Activated CD4-positive, alpha-beta T cell treated with anti-CD3 and anti-CD28 coated beads for 36 hours (primary cell): ENCODE measurements at regions of chr9 and their contacts with region 1.

Region 1: DNA sequence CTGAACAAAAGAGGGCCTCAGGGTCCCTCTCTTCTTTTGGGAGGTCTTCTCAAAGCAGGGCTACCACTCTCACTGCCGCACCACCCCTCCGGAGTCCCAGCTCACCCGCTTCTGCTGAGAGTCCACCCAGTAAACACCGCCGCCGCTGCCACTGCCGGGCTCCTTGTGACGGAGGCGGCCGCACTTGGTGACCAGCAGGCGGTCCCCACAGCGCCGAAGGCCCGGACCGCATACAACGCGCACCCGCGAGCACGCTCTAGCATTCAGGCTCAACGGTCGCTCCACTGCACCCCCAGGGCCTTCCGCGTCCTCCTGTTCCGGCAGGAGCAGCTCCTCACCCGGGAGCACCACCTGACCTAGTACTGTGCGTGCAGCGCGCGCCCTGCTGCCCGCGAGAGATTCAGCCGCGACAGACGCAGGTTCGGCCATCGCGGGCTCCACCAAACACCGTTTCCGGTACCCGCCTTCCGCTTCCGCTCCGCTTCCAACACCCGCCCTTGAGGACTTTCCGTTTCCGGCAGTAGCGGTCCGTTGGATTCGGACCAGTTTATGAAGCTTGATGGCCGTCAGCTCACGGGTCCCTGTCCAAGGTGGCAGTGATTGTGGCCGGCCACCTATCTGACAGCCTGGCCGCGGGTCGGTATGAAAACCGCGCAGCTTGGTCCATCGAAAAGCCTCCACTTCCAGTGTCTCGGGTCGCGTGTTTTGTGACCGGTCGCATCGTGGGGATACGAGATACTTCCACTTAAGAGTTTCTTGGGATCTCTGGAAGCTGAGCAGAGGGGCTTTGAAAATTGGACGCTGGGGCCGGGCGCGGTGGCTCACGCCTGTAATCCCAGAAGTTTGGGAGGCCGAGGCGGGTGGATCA is at the start of gene EXOSC3:
- DNase-seq: peak; percentile 93
- ATAC-seq: peak; percentile 90
- H3K4me3 Mint-ChIP-seq: peak within 1 kb of the TSS; percentile 98
- H3K27ac Mint-ChIP-seq: peak within 1 kb of the TSS; percentile 96
- H3K4me1 Mint-ChIP-seq: peaks cover 30% of the 10 kb centered on the region
- H3K27me3 Mint-ChIP-seq: no peaks in the 10 kb centered on the region
- total RNA-seq, gene EXOSC3: 86.9 to 117 TPM

Region 2: GRCh38 chr9:37422289-37423104 is 362.4 kb before region 1 on chr9 and contains the start of gene GRHPR:
- CTCF ChIA-PET with region 1: no interaction called
- POLR2A ChIA-PET with region 1: no interaction called
- intact Hi-C with region 1: loop called in 1 of 2 experiments (anchors 1 kb)
- DNase-seq: peak; percentile 95
- ATAC-seq: peak; percentile 99
- H3K4me3 Mint-ChIP-seq: peak within 1 kb of the TSS; percentile 91
- H3K27ac Mint-ChIP-seq: peak within 1 kb of the TSS; percentile 95
- H3K4me1 Mint-ChIP-seq: peaks cover 25% of the 10 kb centered on the region
- H3K27me3 Mint-ChIP-seq: no peaks in the 10 kb centered on the region
- total RNA-seq, gene GRHPR: 69.1 to 74.4 TPM

Region 3: GRCh38 chr9:37732086-37732741 is 52.6 kb before region 1 on chr9:
- CTCF ChIA-PET with region 1: no interaction called
- POLR2A ChIA-PET with region 1: no interaction called
- intact Hi-C with region 1: no loop called
- DNase-seq: no peak
- ATAC-seq: no peak
- H3K4me3 Mint-ChIP-seq: no peak overlapping the region
- H3K27ac Mint-ChIP-seq: no peak overlapping the region
- H3K4me1 Mint-ChIP-seq: no peaks in the 10 kb centered on the region
- H3K27me3 Mint-ChIP-seq: peaks cover 9% of the 10 kb centered on the region

Region 4: DNA sequence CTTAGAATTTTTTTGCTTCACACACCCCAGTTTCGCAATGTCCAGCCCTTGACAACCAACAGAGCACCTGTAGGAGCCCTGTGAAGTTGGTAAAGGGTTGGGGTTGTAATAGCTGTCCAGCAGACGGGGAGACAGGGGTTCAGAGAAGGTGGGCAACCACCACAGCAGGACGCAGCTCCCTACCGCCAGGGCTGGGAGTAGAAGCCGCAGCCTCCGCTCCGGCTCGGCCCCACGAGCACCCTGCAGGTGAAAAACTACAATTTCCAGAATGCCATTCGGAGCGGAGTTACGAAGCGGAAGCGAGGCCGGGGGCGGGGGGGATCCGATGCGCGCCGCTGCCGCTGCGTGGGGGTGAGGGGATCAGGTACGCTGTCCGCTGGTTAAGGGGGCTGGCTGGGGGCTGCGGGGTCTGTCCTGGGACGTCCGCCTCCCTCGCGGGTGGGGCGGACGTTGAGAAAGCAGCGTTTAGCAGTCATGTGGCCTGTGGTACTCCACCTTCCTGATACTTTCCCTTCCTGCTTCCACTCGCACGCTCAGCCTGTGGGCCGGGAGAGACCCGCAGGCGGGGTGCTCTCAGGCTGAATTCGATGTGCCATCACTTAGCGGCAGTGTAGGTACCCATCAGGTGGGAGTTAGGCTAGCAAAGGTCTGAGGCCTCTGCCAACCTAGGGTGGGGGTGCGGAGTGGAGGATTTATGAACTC is 31.2 kb before region 1 on chr9 and contains the start of gene TRMT10B:
- CTCF ChIA-PET with region 1: interaction called, 4 read pairs
- POLR2A ChIA-PET with region 1: no interaction called
- intact Hi-C with region 1: loop called (anchors 1 to 2 kb)
- DNase-seq: peak; percentile 88
- ATAC-seq: peak; percentile 94
- H3K4me3 Mint-ChIP-seq: peak within 1 kb of the TSS; percentile 91
- H3K27ac Mint-ChIP-seq: peak within 1 kb of the TSS; percentile 92
- H3K4me1 Mint-ChIP-seq: peaks cover 32% of the 10 kb centered on the region
- H3K27me3 Mint-ChIP-seq: no peaks in the 10 kb centered on the region
- total RNA-seq, gene TRMT10B: 12.3 to 15.6 TPM

Region 5: DNA sequence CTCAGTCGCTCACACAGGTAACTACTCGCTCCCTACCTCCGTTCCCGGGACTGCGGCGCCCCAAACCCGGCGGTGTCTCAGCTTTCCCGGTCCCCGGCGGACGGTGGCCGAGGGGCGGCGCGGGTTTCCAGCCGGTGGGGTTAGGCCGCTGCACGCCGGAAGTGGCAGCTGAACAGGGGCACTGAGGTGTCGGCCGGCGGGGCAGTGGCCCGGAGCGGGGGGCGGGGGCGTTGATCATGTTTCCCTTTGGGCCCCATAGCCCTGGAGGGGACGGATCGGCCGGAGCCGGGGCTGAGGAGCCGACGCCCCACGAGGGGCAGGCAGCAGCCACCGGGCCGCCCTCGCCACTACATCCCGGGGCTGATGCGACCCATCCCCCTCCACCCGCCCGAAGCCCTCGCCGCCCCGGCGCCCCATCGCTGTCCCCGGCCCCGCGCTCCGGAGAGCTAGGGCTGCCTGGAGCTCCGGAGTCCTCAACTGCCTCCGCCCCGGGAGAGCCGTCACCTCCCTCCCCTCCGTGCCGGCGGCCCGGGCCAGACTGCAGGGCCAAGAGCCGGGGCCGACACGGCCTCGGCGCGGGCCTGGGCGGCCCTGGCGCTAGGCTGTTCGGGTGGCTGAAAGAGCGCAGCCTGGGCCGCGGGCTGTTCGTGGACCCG is 15.9 kb after region 1 on chr9 and contains the start of gene DCAF10:
- CTCF ChIA-PET with region 1: interaction called, 5 read pairs
- POLR2A ChIA-PET with region 1: interaction called, 10 read pairs
- intact Hi-C with region 1: loop called (anchors 1 kb)
- DNase-seq: peak; percentile 92
- ATAC-seq: peak; percentile 78
- H3K4me3 Mint-ChIP-seq: peak within 1 kb of the TSS; percentile 90
- H3K27ac Mint-ChIP-seq: peak within 1 kb of the TSS; percentile 89
- H3K4me1 Mint-ChIP-seq: peaks cover 35% of the 10 kb centered on the region
- H3K27me3 Mint-ChIP-seq: no peaks in the 10 kb centered on the region
- total RNA-seq, gene DCAF10: 13.9 to 15.4 TPM

Region 6: GRCh38 chr9:37840560-37841194 is 55.8 kb after region 1 on chr9:
- CTCF ChIA-PET with region 1: no interaction called
- POLR2A ChIA-PET with region 1: no interaction called
- intact Hi-C with region 1: loop called in 1 of 2 experiments (anchors 5 kb)
- DNase-seq: peak; percentile 41
- ATAC-seq: peak; percentile 58
- H3K4me3 Mint-ChIP-seq: no peak overlapping the region
- H3K27ac Mint-ChIP-seq: no peak overlapping the region
- H3K4me1 Mint-ChIP-seq: peaks cover 11% of the 10 kb centered on the region
- H3K27me3 Mint-ChIP-seq: no peaks in the 10 kb centered on the region

Region 7: DNA sequence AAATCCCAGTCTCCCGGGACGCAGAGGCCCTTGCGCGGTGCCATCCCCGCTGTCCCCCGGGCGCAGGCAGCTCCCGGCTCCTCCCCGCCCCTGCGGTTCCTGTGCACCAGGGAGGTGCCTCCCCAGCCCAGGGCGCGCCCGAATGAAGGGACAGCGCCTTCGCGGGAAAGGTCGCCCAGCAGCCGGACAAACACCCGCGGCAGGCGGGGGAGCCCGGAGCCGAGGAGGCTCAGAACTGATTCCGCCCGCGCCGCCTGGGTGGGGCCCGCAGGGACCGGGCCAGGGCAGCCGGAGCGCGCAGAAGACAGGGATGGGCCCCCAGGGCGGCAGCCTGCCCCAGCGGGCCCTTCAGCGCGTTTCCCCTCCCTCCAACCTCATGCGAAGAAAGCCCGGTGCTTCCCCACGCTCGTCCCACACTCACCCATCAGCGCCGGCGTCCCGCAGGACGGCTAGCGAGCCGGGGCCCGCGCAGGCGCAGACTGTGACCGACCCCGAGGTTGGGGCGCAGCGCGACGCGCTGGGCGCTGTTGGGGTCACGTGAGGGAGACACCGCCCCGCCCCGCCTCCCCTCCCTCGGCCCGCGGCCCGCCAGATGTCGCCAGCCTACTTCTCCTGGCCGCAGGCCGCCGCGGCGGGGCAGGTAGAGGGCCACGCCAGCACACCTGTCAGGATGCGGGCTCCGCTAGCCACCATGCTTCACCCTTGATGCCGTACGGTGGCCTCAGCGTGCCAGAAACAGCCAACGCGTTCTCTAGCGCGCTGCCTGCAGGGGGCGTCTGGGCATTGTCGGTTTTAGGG is 119.0 kb after region 1 on chr9 and contains the start of gene SLC25A51:
- CTCF ChIA-PET with region 1: interaction called, 5 read pairs
- POLR2A ChIA-PET with region 1: no interaction called
- intact Hi-C with region 1: loop called (anchors 1 kb)
- DNase-seq: peak; percentile 96
- ATAC-seq: peak; percentile 86
- H3K4me3 Mint-ChIP-seq: peak within 1 kb of the TSS; percentile 85
- H3K27ac Mint-ChIP-seq: peak within 1 kb of the TSS; percentile 89
- H3K4me1 Mint-ChIP-seq: peaks cover 11% of the 10 kb centered on the region
- H3K27me3 Mint-ChIP-seq: no peaks in the 10 kb centered on the region
- total RNA-seq, gene SLC25A51: 25.5 to 29.4 TPM